AG04449 (cell line): ENCODE measurements at regions of chr14 and their contacts with region 1.

Region 1: DNA sequence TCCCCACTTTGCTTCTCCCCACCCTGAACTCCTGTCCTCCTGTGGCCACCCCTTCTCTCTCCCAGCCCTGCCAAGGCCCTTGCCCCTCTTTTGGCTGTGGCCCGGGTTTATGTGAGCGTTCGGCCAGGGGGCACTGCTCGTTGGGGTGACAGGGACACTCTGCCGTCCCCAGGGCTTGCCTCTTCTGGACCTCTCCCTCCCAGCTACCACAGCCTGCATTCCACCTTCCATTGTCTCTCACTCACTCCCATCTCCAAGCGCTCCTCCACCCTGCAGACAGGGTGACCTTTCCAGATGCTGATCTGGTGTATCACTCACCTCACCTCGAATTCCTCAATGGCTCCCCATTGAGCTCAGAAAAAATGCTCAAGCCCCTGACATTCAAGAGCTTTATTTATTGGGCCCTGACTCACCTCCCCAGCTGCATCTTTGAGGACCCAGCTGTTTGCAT is 1.4 kb downstream of the SERPINA9 start:
- DNase-seq: no peak
- H3K4me3 ChIP-seq: no peak overlapping the region
- CTCF ChIP-seq: no peak

Region 2: DNA sequence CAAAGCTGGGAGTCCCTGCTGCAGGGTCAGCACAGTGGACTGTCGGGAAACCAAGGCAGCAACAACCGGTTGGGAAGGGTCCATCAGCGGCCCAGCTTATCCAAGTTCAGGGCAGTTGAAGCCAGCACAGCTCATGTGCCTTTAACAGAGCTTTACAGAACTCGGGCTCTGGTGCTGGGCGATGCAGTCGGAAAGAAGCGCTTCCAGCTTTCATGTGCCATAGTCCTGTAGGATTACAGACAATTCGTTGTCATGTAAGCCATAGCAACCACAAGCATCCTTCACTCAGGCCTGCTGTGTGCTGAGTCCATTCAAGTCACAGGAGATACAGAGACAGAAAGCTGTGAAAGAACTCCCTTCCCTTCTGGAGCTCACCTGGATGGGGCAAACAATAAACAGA is 551.0 kb before region 1 on chr14:
- CTCF ChIA-PET with region 1: no interaction called
- POLR2A ChIA-PET with region 1: no interaction called
- DNase-seq: no peak
- H3K4me3 ChIP-seq: no peak overlapping the region
- CTCF ChIP-seq: no peak

Region 3: GRCh38 chr14:94428610-94429009 is 46.0 kb before region 1 on chr14:
- CTCF ChIA-PET with region 1: interaction called, 14 read pairs
- POLR2A ChIA-PET with region 1: no interaction called
- DNase-seq: no peak
- H3K4me3 ChIP-seq: no peak overlapping the region
- CTCF ChIP-seq: no peak

Region 4: GRCh38 chr14:94494085-94494484 is 19.5 kb after region 1 on chr14:
- CTCF ChIA-PET with region 1: no interaction called
- POLR2A ChIA-PET with region 1: no interaction called
- DNase-seq: no peak
- H3K4me3 ChIP-seq: no peak overlapping the region
- CTCF ChIP-seq: no peak